GM12878 (cell line): ENCODE measurements at regions of chr7 and their contacts with region 1.

Region 1: GRCh38 chr7:101833799-101834198 is 16.4 kb downstream of the CUX1 start:
- DNase-seq: no peak
- ATAC-seq: no peak
- H3K4me3 ChIP-seq: no peak overlapping the region
- H3K27ac ChIP-seq: no peak overlapping the region
- H3K4me1 ChIP-seq: 0 out of 2 replicates have a peak, but pooled peaks cover 2% of the 10 kb centered on the region
- H3K27me3 ChIP-seq: no peaks in the 10 kb centered on the region
- CTCF ChIP-seq: no peak
- EP300 ChIP-seq: no peak
- POLR2A ChIP-seq: no peak
- RAD21 ChIP-seq: no peak

Region 2: DNA sequence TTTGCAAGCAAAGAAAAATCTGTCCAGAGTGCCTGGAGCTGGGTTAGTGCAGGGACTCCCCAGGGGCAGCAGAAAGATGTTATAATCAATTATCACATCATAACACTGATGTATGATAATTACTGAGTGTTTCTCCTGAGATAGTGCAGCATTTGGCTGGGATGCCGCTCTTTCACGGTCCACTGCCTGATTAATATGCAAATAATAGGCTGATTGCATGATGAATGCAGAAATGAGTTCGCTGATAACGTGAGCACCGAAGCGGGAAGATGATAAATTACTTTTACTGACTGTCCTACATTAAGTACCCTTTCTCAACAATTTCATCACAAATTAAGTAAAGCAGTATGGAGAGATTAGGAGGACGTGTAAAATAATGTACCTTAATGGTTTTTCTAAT is 381.5 kb after region 1 on chr7:
- CTCF ChIA-PET with region 1: no interaction called
- POLR2A ChIA-PET with region 1: no interaction called
- RAD21 ChIA-PET with region 1: no interaction called
- SMC1A ChIA-PET with region 1: no interaction called
- in situ Hi-C with region 1: loop called (anchors 5 kb)
- intact Hi-C with region 1: no loop called
- DNase-seq: no peak
- ATAC-seq: no peak
- H3K4me3 ChIP-seq: no peak overlapping the region
- H3K27ac ChIP-seq: no peak overlapping the region
- H3K4me1 ChIP-seq: peaks cover 18% of the 10 kb centered on the region
- H3K27me3 ChIP-seq: no peaks in the 10 kb centered on the region
- CTCF ChIP-seq: no peak
- EP300 ChIP-seq: no peak
- POLR2A ChIP-seq: no peak
- RAD21 ChIP-seq: no peak